Posterior vena cava (tissue), 2 donors: ENCODE measurements at regions of chr6 and their contacts with region 1.

Region 1: GRCh38 chr6:97497713-97498331 is 214.8 kb upstream of the MMS22L start:
- DNase-seq: peak; percentile 86

Region 2: GRCh38 chr6:99119109-99120031 is 1621.5 kb after region 1 on chr6:
- intact Hi-C with region 1: loop called in 1 of 2 experiments (anchors 5 kb)
- DNase-seq: no peak